ENCODE measurements at regions of chr11 and their contacts with region 1.

Region 1: GRCh38 chr11:77994412-77995362 is at the start of gene INTS4:
- DNase-seq: peak; percentile 99
- H3K4me3 ChIP-seq: peak within 1 kb of the TSS; percentile 79
- H3K27ac ChIP-seq: peak within 1 kb of the TSS; percentile 79
- H3K4me1 ChIP-seq: peaks cover 38% of the 10 kb centered on the region
- CTCF ChIP-seq: peak; percentile 41; the same call in 1 of the 2 replicates
- total RNA-seq, gene INTS4: 50.6 and 57.1 TPM in 2 replicates

Region 2: DNA sequence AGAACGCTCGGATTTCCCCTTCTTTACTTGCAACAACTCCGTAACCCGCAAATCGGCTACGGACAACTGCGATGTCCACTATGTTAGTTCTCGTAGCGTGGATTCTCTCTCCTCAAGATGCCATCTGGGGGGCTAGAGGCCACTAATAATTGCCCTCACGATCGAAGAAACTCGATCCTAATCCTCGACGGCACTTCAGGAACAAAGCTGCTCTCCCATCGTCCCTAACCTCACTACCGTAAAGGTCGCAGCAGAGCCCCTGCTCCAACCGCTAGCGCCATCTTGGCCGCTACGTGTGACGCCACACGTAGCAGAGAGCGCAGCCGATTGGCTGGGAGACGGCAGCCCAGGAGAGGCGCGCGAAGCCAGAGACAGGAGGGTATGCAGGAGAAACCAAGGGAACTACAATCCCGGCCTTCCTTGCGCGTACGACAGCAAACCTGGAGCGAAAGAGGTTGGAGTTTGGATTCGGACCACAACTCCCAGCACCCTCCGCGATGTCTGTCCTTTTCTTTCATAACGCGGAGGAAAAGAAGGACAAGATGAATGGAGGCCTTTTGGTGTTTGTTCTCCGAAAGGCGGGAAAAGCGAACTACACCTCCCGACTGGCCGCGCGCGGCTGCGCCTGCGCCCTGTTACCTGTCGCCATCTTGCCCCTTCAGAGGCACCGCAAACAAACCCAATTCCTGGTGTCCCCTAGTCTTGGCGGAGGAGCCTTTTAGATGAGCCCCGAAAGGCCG is 1550.1 kb before region 1 on chr11 and contains the start of gene EMSY:
- CTCF ChIA-PET with region 1: no interaction called
- POLR2A ChIA-PET with region 1: no interaction called
- intact Hi-C with region 1: loop called (anchors 10 kb)
- DNase-seq: peak; percentile 97
- H3K4me3 ChIP-seq: peak within 1 kb of the TSS; percentile 99
- H3K27ac ChIP-seq: peak within 1 kb of the TSS; percentile 64
- H3K4me1 ChIP-seq: peaks cover 19% of the 10 kb centered on the region
- CTCF ChIP-seq: no peak
- total RNA-seq, gene EMSY: 26.3 and 45.5 TPM in 2 replicates

Region 3: GRCh38 chr11:77637345-77638165 is 357.1 kb before region 1 on chr11 and contains the start of gene CLNS1A:
- CTCF ChIA-PET with region 1: no interaction called
- POLR2A ChIA-PET with region 1: no interaction called
- intact Hi-C with region 1: loop called (anchors 1 kb)
- DNase-seq: peak; percentile 92
- H3K4me3 ChIP-seq: peak within 1 kb of the TSS; percentile 96
- H3K27ac ChIP-seq: peak within 1 kb of the TSS; percentile 59
- H3K4me1 ChIP-seq: peaks cover 12% of the 10 kb centered on the region
- CTCF ChIP-seq: no peak
- total RNA-seq, gene CLNS1A: 115 and 121 TPM in 2 replicates

Region 4: DNA sequence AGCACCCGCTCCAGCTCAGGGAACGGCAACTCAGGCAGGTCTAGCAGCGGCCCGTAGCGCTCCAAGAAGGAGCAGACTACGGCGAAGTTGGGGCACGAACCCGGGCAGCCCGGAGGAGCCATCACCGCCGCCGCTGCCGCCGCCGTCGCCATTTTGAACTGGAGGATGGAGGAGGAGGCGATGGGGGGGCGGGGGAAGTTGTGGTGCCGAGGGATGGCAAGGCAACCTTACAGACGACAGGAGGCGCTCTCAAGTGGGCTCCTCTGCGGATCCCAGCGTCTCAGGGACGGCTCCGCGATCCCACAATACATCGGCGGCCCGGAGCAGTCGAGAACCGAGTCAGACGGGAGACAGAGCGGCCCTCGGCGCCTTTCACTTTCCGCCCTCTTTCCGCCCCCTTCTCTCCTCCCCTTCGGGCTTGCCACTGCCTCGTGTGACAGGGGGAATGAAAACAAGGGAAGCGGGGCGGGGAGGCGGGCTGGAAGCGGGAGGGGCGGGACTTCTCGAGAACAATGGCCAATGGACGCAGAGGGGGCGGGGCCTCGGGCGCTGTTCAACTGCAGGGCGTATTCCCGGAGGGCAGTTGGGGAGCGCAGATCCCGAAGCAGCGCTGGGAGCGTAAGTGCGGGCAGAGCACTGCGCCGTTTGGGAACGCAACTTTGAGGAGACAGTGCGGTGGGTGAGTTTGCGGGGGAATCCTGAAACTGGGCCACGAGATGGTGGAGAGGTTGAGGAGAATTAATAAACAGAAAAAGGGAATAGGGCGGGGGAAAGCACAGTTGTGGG is 173.9 kb before region 1 on chr11 and contains the starts of genes AAMDC and RSF1:
- CTCF ChIA-PET with region 1: interaction called, 3 read pairs
- POLR2A ChIA-PET with region 1: interaction called, 11 read pairs
- intact Hi-C with region 1: loop called (anchors 1 kb)
- DNase-seq: peak; percentile 96
- H3K4me3 ChIP-seq: peak within 1 kb of the TSS; percentile 97
- H3K27ac ChIP-seq: peak within 1 kb of the TSS; percentile 85
- H3K4me1 ChIP-seq: peaks cover 13% of the 10 kb centered on the region
- CTCF ChIP-seq: peak; percentile 73
- total RNA-seq, gene AAMDC: 11.0 and 16.2 TPM in 2 replicates
- total RNA-seq, gene RSF1: 33.5 and 56.9 TPM in 2 replicates

Region 5: GRCh38 chr11:77908835-77909234 is 85.9 kb before region 1 on chr11:
- CTCF ChIA-PET with region 1: no interaction called
- POLR2A ChIA-PET with region 1: no interaction called
- intact Hi-C with region 1: no loop called
- DNase-seq: no peak
- H3K4me3 ChIP-seq: no peak overlapping the region
- H3K27ac ChIP-seq: no peak overlapping the region
- H3K4me1 ChIP-seq: no peaks in the 10 kb centered on the region
- CTCF ChIP-seq: no peak

Region 6: GRCh38 chr11:78010310-78010709 is 15.6 kb after region 1 on chr11:
- CTCF ChIA-PET with region 1: no interaction called
- POLR2A ChIA-PET with region 1: interaction called, 10 read pairs
- intact Hi-C with region 1: no loop called
- DNase-seq: no peak
- H3K4me3 ChIP-seq: no peak overlapping the region
- H3K27ac ChIP-seq: no peak overlapping the region
- H3K4me1 ChIP-seq: no peaks in the 10 kb centered on the region
- CTCF ChIP-seq: no peak

Region 7: GRCh38 chr11:78139422-78140391 is 145.0 kb after region 1 on chr11 and contains the start of gene ALG8:
- CTCF ChIA-PET with region 1: no interaction called
- POLR2A ChIA-PET with region 1: interaction called, 6 read pairs
- intact Hi-C with region 1: loop called (anchors 10 kb)
- DNase-seq: peak; percentile 96
- H3K4me3 ChIP-seq: peak within 1 kb of the TSS; percentile 82
- H3K27ac ChIP-seq: peak within 1 kb of the TSS; percentile 75
- H3K4me1 ChIP-seq: peaks cover 46% of the 10 kb centered on the region
- CTCF ChIP-seq: no peak
- total RNA-seq, gene ALG8: 42.5 and 43.7 TPM in 2 replicates

Region 8: GRCh38 chr11:78188286-78189173 is 193.8 kb after region 1 on chr11 and contains the starts of genes KCTD21 and USP35:
- CTCF ChIA-PET with region 1: no interaction called
- POLR2A ChIA-PET with region 1: interaction called, 5 read pairs
- intact Hi-C with region 1: loop called (anchors 2 kb)
- DNase-seq: peak; percentile 95
- H3K4me3 ChIP-seq: peak within 1 kb of the TSS; percentile 79
- H3K27ac ChIP-seq: no peak within 1 kb of the TSS
- H3K4me1 ChIP-seq: peaks cover 24% of the 10 kb centered on the region
- CTCF ChIP-seq: no peak
- total RNA-seq, gene KCTD21: 1.5 and 2.8 TPM in 2 replicates
- total RNA-seq, gene USP35: 3.2 and 3.4 TPM in 2 replicates

Measured in OCI-LY7 (cell line).